Naive thymus-derived CD4-positive, alpha-beta T cell (primary cell): ENCODE measurements at regions of chr16 and their contacts with region 1.

Region 1: DNA sequence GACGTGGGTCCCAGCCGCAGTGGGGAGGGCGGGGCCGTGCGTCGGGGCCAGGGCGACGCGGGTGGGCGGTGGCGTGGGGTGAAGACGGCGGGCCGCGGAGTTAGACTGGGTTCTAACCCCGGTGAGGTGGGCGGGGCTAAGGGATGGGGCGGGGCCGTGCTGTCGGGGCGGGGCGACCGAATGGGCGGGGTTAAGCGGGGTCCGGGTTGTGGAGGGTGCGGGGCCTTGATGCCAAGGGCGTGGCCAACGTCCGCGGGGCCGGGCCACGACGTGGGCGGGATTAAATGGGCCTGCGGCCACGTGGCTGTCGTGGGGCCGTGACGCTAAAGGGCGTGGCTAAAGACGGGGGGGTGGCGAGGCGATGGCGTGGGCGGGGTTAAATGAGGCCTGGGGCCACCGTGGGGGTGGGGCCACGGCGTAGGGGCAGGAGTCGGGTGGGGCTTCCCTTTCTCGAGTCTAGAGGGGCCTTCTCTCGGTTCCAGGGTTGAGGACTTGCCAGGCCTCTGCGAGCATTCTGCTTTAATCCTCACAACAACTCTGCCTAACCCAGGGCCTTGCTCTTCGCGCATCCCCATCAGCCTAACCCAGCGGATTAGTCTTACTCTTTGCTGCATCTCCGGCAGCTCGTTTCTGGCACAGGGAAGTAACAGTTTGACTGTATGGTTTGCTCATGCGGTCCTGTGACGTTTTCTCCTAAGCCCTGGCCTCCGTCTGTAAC is 739 bp downstream of the TCF25 start:
- DNase-seq: peak; percentile 87 to 97 (median 90)
- ATAC-seq: peak; percentile 90
- H3K4me3 ChIP-seq: peak overlapping the region; percentile 94
- H3K4me3 Mint-ChIP-seq: peak overlapping the region; percentile 73 to 95 (median 92)
- H3K27ac ChIP-seq: peak overlapping the region; percentile 100
- H3K27ac Mint-ChIP-seq: peak overlapping the region; percentile 89 to 99 (median 97)
- H3K4me1 ChIP-seq: peaks cover 4 to 17% of the 10 kb centered on the region in 2 donors
- H3K4me1 Mint-ChIP-seq: peaks cover 6 to 32% (median 20%) of the 10 kb centered on the region in 7 donors
- H3K27me3 ChIP-seq: no peaks in the 10 kb centered on the region
- H3K27me3 Mint-ChIP-seq: no peaks in the 10 kb centered on the region

Region 2: DNA sequence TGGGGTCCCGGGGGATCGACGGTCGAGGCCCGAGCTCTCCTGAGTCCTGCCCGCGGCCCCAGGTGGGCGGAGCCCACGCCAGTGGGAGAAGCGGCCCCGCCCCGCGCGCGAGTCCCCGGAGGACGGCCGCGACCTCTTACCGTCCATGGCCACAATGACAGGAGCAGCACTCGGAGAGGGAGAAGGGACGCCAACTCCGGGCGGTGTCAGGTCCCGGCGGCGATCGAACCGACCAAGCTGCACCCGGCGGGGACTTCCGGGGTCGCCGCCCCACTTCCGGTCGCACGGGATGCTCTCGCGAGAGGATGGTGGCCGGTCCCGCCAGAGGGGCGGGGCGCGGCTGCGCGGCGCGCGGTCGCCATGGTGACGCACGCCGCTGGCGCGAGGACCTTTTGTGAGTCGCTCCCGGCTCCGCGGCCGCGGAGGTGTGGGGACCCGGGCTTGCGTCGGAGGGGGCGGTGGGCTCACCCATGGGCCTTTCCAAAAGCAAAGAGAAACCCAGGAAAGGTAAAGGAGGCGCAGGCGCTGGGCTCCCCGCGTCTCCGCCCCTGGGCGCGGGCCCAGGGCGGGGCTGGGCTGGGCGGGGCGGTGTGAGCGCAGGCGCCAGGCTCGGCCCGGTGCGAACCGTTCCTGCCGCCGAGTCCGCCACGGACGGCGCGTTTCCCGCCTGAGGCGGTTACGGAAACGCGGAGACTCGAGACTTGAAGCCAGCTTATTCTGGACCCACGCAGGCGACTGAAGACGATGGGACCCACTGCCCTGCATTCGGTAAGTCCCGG is 216.5 kb before region 1 on chr16 and contains the starts of genes CHMP1A and SPATA33:
- CTCF ChIA-PET with region 1: no interaction called
- POLR2A ChIA-PET with region 1: interaction called, 4 read pairs
- intact Hi-C with region 1: loop called in 1 of 2 experiments (anchors 1 kb)
- DNase-seq: peak; percentile 87 to 98 (median 94)
- ATAC-seq: peak; percentile 95
- H3K4me3 ChIP-seq: peak within 1 kb of the TSS; percentile 88
- H3K4me3 Mint-ChIP-seq: peak within 1 kb of the TSS; percentile 82 to 93 (median 86)
- H3K27ac ChIP-seq: peak within 1 kb of the TSS; percentile 85
- H3K27ac Mint-ChIP-seq: peak within 1 kb of the TSS; percentile 71 to 89 (median 85)
- H3K4me1 ChIP-seq: peaks cover 6 to 16% of the 10 kb centered on the region in 2 donors
- H3K4me1 Mint-ChIP-seq: peaks cover 17 to 44% (median 36%) of the 10 kb centered on the region in 7 donors
- H3K27me3 ChIP-seq: no peaks in the 10 kb centered on the region
- H3K27me3 Mint-ChIP-seq: no peaks in the 10 kb centered on the region
- total RNA-seq, gene CHMP1A: 64.4 to 99.0 (median 65.9) TPM
- total RNA-seq, gene SPATA33: 6.4 to 17.0 (median 7.9) TPM

Region 3: GRCh38 chr16:89815639-89816348 is 58.3 kb before region 1 on chr16:
- CTCF ChIA-PET with region 1: no interaction called
- POLR2A ChIA-PET with region 1: interaction called, 6 read pairs
- intact Hi-C with region 1: loop called (anchors 1 kb)
- DNase-seq: no peak
- ATAC-seq: peak; percentile 14
- H3K4me3 ChIP-seq: peak overlapping the region; percentile 37
- H3K4me3 Mint-ChIP-seq: peak overlapping the region; percentile 68 to 89 (median 80)
- H3K27ac ChIP-seq: peak overlapping the region; percentile 13
- H3K27ac Mint-ChIP-seq: peak overlapping the region in 1 of 9 donors; percentile 66
- H3K4me1 ChIP-seq: peaks cover 3 to 4% of the 10 kb centered on the region in 2 donors
- H3K4me1 Mint-ChIP-seq: peaks cover 10 to 29% (median 20%) of the 10 kb centered on the region in 7 donors
- H3K27me3 ChIP-seq: no peaks in the 10 kb centered on the region
- H3K27me3 Mint-ChIP-seq: no peaks in the 10 kb centered on the region

Region 4: DNA sequence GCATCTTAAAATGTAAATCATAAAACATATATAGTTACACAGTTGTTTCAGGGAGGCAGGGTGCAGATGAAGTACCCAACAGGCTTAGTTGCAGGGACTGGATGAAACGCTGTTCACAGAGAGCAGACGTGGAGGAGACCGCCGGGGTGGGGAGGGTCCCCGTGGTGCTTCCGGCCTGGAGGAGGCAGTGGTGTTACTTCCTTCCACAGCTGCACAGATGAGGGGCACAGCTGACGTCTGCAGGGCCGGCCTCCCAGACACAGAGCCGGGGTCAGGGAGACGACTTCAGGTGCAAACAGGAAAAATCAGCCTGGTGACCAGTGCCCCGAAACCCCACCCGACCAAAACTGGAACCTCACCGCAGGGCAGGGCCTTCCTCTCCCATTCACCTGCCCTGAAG is 28.7 kb before region 1 on chr16:
- CTCF ChIA-PET with region 1: no interaction called
- POLR2A ChIA-PET with region 1: no interaction called
- intact Hi-C with region 1: no loop called
- DNase-seq: peak in 6 of 9 donors; percentile 10 to 44 (median 33)
- ATAC-seq: peak; percentile 44
- H3K4me3 ChIP-seq: no peak overlapping the region
- H3K4me3 Mint-ChIP-seq: peak overlapping the region in 9 of 10 donors; percentile 25 to 64 (median 51)
- H3K27ac ChIP-seq: no peak overlapping the region
- H3K27ac Mint-ChIP-seq: peak overlapping the region in 3 of 9 donors; percentile 17 to 46 (median 38)
- H3K4me1 ChIP-seq: peaks cover 3 to 17% of the 10 kb centered on the region in 2 donors
- H3K4me1 Mint-ChIP-seq: peaks cover 3 to 13% (median 10%) of the 10 kb centered on the region in 7 donors
- H3K27me3 ChIP-seq: no peaks in the 10 kb centered on the region
- H3K27me3 Mint-ChIP-seq: peaks cover 0 to 5% (median 0%) of the 10 kb centered on the region in 5 donors

Region 5: DNA sequence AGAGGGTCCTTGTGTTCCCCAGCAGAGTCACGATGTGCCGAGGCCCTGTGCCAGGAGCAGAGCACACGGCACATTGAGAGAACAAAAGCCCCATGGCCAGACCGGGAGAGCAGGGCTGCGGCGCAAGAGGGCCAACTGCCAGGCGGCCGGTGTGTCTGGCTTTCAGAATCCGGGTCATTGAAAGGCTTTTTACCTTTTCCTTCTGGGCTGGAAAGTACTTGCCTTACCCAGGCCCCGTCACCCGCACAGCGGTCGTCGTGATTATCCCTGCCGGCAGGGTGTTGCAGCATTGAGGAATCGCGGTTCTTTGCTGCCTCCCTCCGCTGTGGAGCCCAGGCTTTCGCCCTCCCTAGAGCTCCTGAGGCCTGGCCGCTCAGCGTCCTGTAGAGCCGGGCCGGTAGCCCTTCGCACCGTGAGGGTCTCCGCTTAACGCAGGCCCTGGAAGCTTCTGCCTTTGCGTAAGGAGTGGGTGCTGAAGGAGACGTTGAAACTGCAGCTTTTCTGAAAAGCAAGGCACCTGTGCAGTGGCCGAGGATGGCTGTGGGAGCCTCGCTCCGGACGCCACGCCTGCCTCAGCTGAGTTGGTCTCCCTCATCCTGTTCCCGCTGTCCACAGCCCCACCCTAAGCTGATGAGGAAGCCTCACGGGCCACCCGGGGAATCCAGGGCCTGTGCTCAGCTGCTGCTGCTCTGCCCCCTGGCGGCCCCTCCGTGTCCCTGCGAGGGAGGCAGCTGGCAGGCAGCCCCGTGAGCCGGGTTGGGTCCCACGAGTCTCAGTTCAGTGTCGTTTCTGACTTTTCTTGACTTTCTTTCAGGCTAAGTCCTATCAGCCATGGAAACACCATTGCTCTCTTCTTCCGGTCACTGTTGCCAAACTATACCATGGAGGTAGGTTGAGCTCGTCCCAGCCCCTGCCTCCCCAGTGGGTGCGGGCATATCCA is 35.9 kb after region 1 on chr16:
- CTCF ChIA-PET with region 1: interaction called, 5 read pairs
- POLR2A ChIA-PET with region 1: interaction called, 11 read pairs
- intact Hi-C with region 1: loop called in 1 of 2 experiments (anchors 5 kb)
- DNase-seq: peak; percentile 50 to 73 (median 66)
- ATAC-seq: peak; percentile 93
- H3K4me3 ChIP-seq: no peak overlapping the region
- H3K4me3 Mint-ChIP-seq: peak overlapping the region in 1 of 10 donors; percentile 2
- H3K27ac ChIP-seq: no peak overlapping the region
- H3K27ac Mint-ChIP-seq: peak overlapping the region in 4 of 9 donors; percentile 11 to 67 (median 44)
- H3K4me1 ChIP-seq: peaks cover 3 to 4% of the 10 kb centered on the region in 2 donors
- H3K4me1 Mint-ChIP-seq: peaks cover 5 to 15% (median 8%) of the 10 kb centered on the region in 7 donors
- H3K27me3 ChIP-seq: no peaks in the 10 kb centered on the region
- H3K27me3 Mint-ChIP-seq: no peaks in the 10 kb centered on the region

Region 6: GRCh38 chr16:89922884-89923690 is 49.0 kb after region 1 on chr16 and contains the start of gene TUBB3:
- CTCF ChIA-PET with region 1: no interaction called
- POLR2A ChIA-PET with region 1: interaction called, 5 read pairs
- intact Hi-C with region 1: loop called (anchors 2 to 5 kb)
- DNase-seq: peak in 1 of 9 donors; percentile 82
- ATAC-seq: peak; percentile 31
- H3K4me3 ChIP-seq: no peak within 1 kb of the TSS
- H3K4me3 Mint-ChIP-seq: peak within 1 kb of the TSS in 8 of 10 donors; percentile 27 to 78 (median 46)
- H3K27ac ChIP-seq: no peak within 1 kb of the TSS
- H3K27ac Mint-ChIP-seq: peak within 1 kb of the TSS in 1 of 9 donors; percentile 68
- H3K4me1 ChIP-seq: peaks cover 8 to 15% of the 10 kb centered on the region in 2 donors
- H3K4me1 Mint-ChIP-seq: peaks cover 12 to 41% (median 32%) of the 10 kb centered on the region in 7 donors
- H3K27me3 ChIP-seq: peaks cover 4 to 15% of the 10 kb centered on the region in 2 donors
- H3K27me3 Mint-ChIP-seq: peaks cover 6 to 42% (median 20%) of the 10 kb centered on the region in 5 donors
- total RNA-seq, gene TUBB3: 0.48 to 2.8 TPM in 2 of 5 experiments, not detected in the others

Region 7: DNA sequence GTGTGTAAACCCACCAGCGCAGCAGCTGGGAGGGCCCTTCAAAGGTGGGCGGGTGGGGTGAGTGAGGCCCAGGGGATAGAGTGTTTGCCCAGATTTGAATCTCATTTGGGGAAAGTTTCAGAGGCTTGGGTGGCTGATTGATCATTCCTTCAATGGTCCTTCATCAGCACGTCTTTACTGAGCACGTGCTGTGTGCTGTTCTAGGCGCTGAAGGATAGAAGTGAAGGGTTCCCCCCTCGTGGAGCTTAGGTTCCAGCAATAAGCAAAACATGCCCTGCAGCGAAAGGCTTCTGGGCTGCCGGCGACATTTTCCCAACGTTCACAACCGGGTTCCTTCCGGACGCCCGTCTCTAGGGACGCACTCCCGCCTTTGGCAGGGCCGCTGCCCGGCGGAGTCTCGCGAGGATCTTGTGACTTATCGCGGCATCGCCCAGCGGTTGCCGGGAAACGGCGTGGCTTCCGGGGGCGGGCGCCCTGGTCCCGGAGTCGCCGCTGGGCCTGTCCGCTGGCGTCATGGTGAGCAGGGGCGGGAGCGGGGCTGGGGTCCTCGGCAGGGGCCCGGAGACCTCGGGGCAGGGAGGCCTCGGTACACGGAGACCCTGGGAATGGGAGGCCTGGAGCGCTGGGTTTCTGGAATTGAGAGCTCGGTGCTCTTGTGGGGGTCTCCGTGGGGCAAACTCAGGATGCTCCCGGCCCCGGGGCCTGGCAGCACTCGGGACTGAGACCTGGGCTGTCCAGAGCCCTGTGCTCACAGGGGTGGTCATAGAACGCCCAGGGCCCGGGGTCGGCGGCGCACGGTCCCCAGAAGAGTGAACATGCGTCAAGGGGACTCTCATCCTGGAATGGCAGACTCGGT is 148.3 kb after region 1 on chr16:
- CTCF ChIA-PET with region 1: no interaction called
- POLR2A ChIA-PET with region 1: no interaction called
- intact Hi-C with region 1: loop called in 1 of 2 experiments (anchors 5 kb)
- DNase-seq: peak; percentile 51 to 89 (median 71)
- ATAC-seq: peak; percentile 80
- H3K4me3 ChIP-seq: peak overlapping the region; percentile 73
- H3K4me3 Mint-ChIP-seq: peak overlapping the region; percentile 75 to 82 (median 80)
- H3K27ac ChIP-seq: peak overlapping the region; percentile 69
- H3K27ac Mint-ChIP-seq: peak overlapping the region; percentile 67 to 84 (median 79)
- H3K4me1 ChIP-seq: peaks cover 11 to 31% of the 10 kb centered on the region in 2 donors
- H3K4me1 Mint-ChIP-seq: peaks cover 15 to 37% (median 28%) of the 10 kb centered on the region in 7 donors
- H3K27me3 ChIP-seq: no peaks in the 10 kb centered on the region
- H3K27me3 Mint-ChIP-seq: peaks cover 0 to 21% (median 0%) of the 10 kb centered on the region in 5 donors